ENCODE measurements at regions of chrX and their contacts with region 1.

Region 1: DNA sequence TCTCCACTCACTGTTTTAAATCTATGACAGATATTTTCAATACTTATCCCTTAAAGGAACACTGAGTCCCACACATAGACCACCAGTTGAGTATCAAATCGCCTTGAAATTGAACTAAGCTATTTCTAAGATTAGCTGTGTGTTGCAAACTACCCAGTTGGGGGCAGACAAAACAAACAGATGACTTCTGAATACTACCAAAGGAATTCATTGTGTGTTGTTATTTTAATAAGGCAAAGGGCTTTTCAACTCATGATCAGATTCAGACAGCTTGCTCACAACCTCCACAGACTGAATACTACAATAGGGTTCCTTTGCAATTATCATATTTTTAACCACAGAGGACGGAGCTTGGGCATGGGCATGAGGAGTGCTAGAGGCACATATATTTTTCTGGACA is 283.0 kb upstream of the GPC4 start:
- DNase-seq: no peak
- ATAC-seq: no peak
- H3K4me3 ChIP-seq: no peak overlapping the region
- H3K27ac ChIP-seq: no peak overlapping the region
- H3K4me1 ChIP-seq: no peaks in the 10 kb centered on the region
- H3K27me3 ChIP-seq: no peaks in the 10 kb centered on the region
- CTCF ChIP-seq: peak in 2 of 3 experiments; percentile 24 to 26; a peak in 2 of 6 replicates
- POLR2A ChIP-seq: no peak
- RAD21 ChIP-seq: peak; percentile 54

Region 2: GRCh38 chrX:133776072-133776471 is 77.8 kb after region 1 on chrX:
- CTCF ChIA-PET with region 1: interaction called, 6 read pairs
- POLR2A ChIA-PET with region 1: no interaction called
- RAD21 ChIA-PET with region 1: interaction called in 1 of 2 experiments, 3 read pairs
- intact Hi-C with region 1: loop called (anchors 1 kb)
- DNase-seq: no peak
- ATAC-seq: peak; percentile 63
- H3K4me3 ChIP-seq: no peak overlapping the region
- H3K27ac ChIP-seq: no peak overlapping the region
- H3K4me1 ChIP-seq: no peaks in the 10 kb centered on the region
- H3K27me3 ChIP-seq: no peaks in the 10 kb centered on the region
- CTCF ChIP-seq: peak; percentile 22 to 57 (median 44); a peak in 4 of 6 replicates
- POLR2A ChIP-seq: no peak
- RAD21 ChIP-seq: peak; percentile 41

Region 3: GRCh38 chrX:133838761-133839676 is 140.7 kb after region 1 on chrX:
- CTCF ChIA-PET with region 1: interaction called, 4 read pairs
- POLR2A ChIA-PET with region 1: no interaction called
- RAD21 ChIA-PET with region 1: no interaction called
- intact Hi-C with region 1: loop called (anchors 10 kb)
- DNase-seq: peak; percentile 3
- ATAC-seq: peak; percentile 53; the same call in 1 of the 2 replicates
- H3K4me3 ChIP-seq: no peak overlapping the region
- H3K27ac ChIP-seq: no peak overlapping the region
- H3K4me1 ChIP-seq: no peaks in the 10 kb centered on the region
- H3K27me3 ChIP-seq: no peaks in the 10 kb centered on the region
- CTCF ChIP-seq: peak; percentile 40 to 64 (median 61); a peak in 5 of 6 replicates
- POLR2A ChIP-seq: no peak
- RAD21 ChIP-seq: peak; percentile 30; the same call in 1 of the 2 replicates

Region 4: DNA sequence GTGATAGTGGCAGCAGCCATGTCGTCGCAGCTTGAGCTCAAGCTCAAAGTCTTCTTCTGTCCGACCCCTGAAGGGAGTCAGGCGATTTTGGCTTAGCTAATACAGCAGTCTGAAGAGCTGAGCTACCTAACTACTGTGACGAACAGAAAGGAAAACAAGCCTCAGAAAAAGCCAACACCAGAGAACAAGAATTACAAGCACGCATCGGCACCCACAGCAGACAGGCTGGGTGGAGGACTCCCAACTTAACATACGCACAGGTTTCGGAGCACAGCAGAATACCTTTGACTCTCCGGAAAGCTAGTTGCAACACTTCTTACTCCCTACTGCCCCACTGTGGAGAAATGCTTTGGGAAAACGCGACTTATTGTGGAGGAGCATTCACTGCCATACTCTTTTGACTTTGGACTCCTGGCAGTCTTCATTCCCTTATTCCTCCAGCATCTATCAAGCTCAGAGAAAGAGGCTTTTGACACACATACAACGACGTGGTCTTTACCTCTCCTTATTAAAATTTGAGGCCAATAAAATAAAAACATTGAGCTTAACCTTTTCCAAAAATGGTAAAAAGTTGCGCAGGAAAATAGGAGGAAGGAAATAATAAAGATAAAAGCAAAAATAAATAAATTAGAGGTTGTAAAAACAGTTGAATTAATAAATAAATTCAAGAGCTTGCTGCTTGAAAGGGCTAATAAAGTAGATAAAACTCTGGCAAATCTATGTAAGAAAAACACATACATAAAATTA is 328.4 kb after region 1 on chrX:
- CTCF ChIA-PET with region 1: interaction called, 11 read pairs
- POLR2A ChIA-PET with region 1: no interaction called
- RAD21 ChIA-PET with region 1: no interaction called
- intact Hi-C with region 1: no loop called
- DNase-seq: peak; percentile 10
- ATAC-seq: peak; percentile 70
- H3K4me3 ChIP-seq: no peak overlapping the region
- H3K27ac ChIP-seq: no peak overlapping the region
- H3K4me1 ChIP-seq: no peaks in the 10 kb centered on the region
- H3K27me3 ChIP-seq: no peaks in the 10 kb centered on the region
- CTCF ChIP-seq: peak; percentile 13 to 55 (median 39); a peak in 4 of 6 replicates
- POLR2A ChIP-seq: no peak
- RAD21 ChIP-seq: peak; percentile 32; the same call in 1 of the 2 replicates

Measured in HCT116 (cell line).